Heart right ventricle (tissue), 16 donors: ENCODE measurements at regions of chr12 and their contacts with region 1.

Region 1: GRCh38 chr12:70236990-70237389 is 6.2 kb upstream of the CNOT2 start:
- DNase-seq: no peak
- ATAC-seq: no peak
- H3K4me3 ChIP-seq: no peak overlapping the region
- H3K27ac ChIP-seq: no peak overlapping the region
- H3K4me1 ChIP-seq: peaks cover 0 to 18% (median 3%) of the 10 kb centered on the region in 9 donors
- H3K27me3 ChIP-seq: no peaks in the 10 kb centered on the region
- CTCF ChIP-seq: no peak

Region 2: GRCh38 chr12:70507442-70507841 is 270.5 kb after region 1 on chr12:
- intact Hi-C with region 1: loop called in 1 of 10 experiments (anchors 5 kb)
- DNase-seq: no peak
- ATAC-seq: no peak
- H3K4me3 ChIP-seq: no peak overlapping the region
- H3K27ac ChIP-seq: no peak overlapping the region
- H3K4me1 ChIP-seq: no peaks in the 10 kb centered on the region
- H3K27me3 ChIP-seq: no peaks in the 10 kb centered on the region
- CTCF ChIP-seq: no peak